Caco-2 (cell line): ENCODE measurements at regions of chr6 and their contacts with region 1.

Region 1: GRCh38 chr6:116531675-116532570 is 13.6 kb downstream of the TRAPPC3L start:
- DNase-seq: peak in 1 of 2 experiments; percentile 63
- H3K4me3 ChIP-seq: no peak overlapping the region
- H3K4me3 Mint-ChIP-seq: no peak overlapping the region
- H3K27ac Mint-ChIP-seq: no peak overlapping the region
- H3K4me1 ChIP-seq: peaks cover 37% of the 10 kb centered on the region
- H3K4me1 Mint-ChIP-seq: peaks cover 37% of the 10 kb centered on the region
- H3K27me3 ChIP-seq: no peaks in the 10 kb centered on the region
- H3K27me3 Mint-ChIP-seq: no peaks in the 10 kb centered on the region
- CTCF ChIP-seq: peak; percentile 63 to 67

Region 2: DNA sequence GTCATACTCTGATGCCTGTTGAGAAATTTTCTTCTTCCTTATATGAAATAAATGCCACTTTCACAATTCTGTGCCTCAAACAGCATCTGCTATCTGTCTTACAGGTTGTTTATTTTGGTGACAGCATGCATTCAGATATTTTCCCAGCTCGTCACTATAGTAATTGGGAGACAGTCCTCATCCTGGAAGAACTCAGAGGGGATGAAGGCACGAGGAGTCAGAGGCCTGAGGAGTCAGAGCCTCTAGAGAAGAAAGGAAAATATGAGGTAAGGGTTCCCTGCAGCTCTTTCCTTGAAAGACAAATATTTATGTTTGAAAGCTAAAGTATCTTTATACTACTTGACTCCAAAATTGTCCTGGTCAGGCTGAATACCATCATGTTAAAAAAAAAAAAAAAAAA is 293.8 kb before region 1 on chr6:
- CTCF ChIA-PET with region 1: no interaction called
- POLR2A ChIA-PET with region 1: no interaction called
- intact Hi-C with region 1: no loop called
- DNase-seq: no peak
- H3K4me3 ChIP-seq: no peak overlapping the region
- H3K4me3 Mint-ChIP-seq: no peak overlapping the region
- H3K27ac Mint-ChIP-seq: no peak overlapping the region
- H3K4me1 ChIP-seq: no peaks in the 10 kb centered on the region
- H3K4me1 Mint-ChIP-seq: no peaks in the 10 kb centered on the region
- H3K27me3 ChIP-seq: no peaks in the 10 kb centered on the region
- H3K27me3 Mint-ChIP-seq: no peaks in the 10 kb centered on the region
- CTCF ChIP-seq: no peak

Region 3: GRCh38 chr6:116287689-116288282 is 244.1 kb before region 1 on chr6:
- CTCF ChIA-PET with region 1: interaction called, 6 read pairs
- POLR2A ChIA-PET with region 1: no interaction called
- intact Hi-C with region 1: loop called (anchors 1 kb)
- DNase-seq: peak in 1 of 2 experiments; percentile 17
- H3K4me3 ChIP-seq: no peak overlapping the region
- H3K4me3 Mint-ChIP-seq: no peak overlapping the region
- H3K27ac Mint-ChIP-seq: no peak overlapping the region
- H3K4me1 ChIP-seq: no peaks in the 10 kb centered on the region
- H3K4me1 Mint-ChIP-seq: no peaks in the 10 kb centered on the region
- H3K27me3 ChIP-seq: no peaks in the 10 kb centered on the region
- H3K27me3 Mint-ChIP-seq: no peaks in the 10 kb centered on the region
- CTCF ChIP-seq: peak; percentile 76 to 81

Region 4: DNA sequence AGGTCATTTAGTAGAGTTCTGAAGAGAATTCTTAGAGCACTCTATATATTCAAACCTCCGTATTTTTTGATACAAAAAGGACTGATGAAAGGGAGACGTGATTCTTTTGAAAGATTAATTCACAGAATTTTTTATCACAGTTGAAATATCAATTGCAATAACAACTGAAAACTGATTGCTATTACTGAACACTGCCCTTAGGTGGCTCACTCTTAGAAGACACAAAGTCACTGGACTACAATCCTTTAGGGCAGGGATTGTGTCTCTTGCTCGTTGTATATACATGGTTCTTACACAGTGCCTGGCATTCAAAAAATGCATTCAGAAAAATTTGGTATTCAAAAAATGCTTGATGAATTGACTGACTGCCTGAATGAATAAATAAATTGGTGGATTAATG is 87.8 kb before region 1 on chr6:
- CTCF ChIA-PET with region 1: no interaction called
- POLR2A ChIA-PET with region 1: no interaction called
- intact Hi-C with region 1: loop called (anchors 1 kb)
- DNase-seq: no peak
- H3K4me3 ChIP-seq: no peak overlapping the region
- H3K4me3 Mint-ChIP-seq: no peak overlapping the region
- H3K27ac Mint-ChIP-seq: no peak overlapping the region
- H3K4me1 ChIP-seq: no peaks in the 10 kb centered on the region
- H3K4me1 Mint-ChIP-seq: no peaks in the 10 kb centered on the region
- H3K27me3 ChIP-seq: no peaks in the 10 kb centered on the region; the same call in 1 of the 2 replicates
- H3K27me3 Mint-ChIP-seq: peaks cover 16% of the 10 kb centered on the region
- CTCF ChIP-seq: peak; percentile 44 to 48

Region 5: GRCh38 chr6:116561377-116562018 is 29.6 kb after region 1 on chr6:
- CTCF ChIA-PET with region 1: no interaction called
- POLR2A ChIA-PET with region 1: no interaction called
- intact Hi-C with region 1: loop called (anchors 1 kb)
- DNase-seq: peak; percentile 68 to 73
- H3K4me3 ChIP-seq: no peak overlapping the region
- H3K4me3 Mint-ChIP-seq: no peak overlapping the region
- H3K27ac Mint-ChIP-seq: no peak overlapping the region
- H3K4me1 ChIP-seq: peaks cover 15% of the 10 kb centered on the region
- H3K4me1 Mint-ChIP-seq: peaks cover 26% of the 10 kb centered on the region
- H3K27me3 ChIP-seq: no peaks in the 10 kb centered on the region
- H3K27me3 Mint-ChIP-seq: no peaks in the 10 kb centered on the region
- CTCF ChIP-seq: peak; percentile 70 to 91

Region 6: GRCh38 chr6:116648156-116648555 is 116.2 kb after region 1 on chr6:
- CTCF ChIA-PET with region 1: no interaction called
- POLR2A ChIA-PET with region 1: no interaction called
- intact Hi-C with region 1: loop called (anchors 1 kb)
- DNase-seq: no peak
- H3K4me3 ChIP-seq: no peak overlapping the region
- H3K4me3 Mint-ChIP-seq: no peak overlapping the region
- H3K27ac Mint-ChIP-seq: no peak overlapping the region
- H3K4me1 ChIP-seq: no peaks in the 10 kb centered on the region
- H3K4me1 Mint-ChIP-seq: no peaks in the 10 kb centered on the region
- H3K27me3 ChIP-seq: no peaks in the 10 kb centered on the region
- H3K27me3 Mint-ChIP-seq: no peaks in the 10 kb centered on the region
- CTCF ChIP-seq: no peak

Region 7: DNA sequence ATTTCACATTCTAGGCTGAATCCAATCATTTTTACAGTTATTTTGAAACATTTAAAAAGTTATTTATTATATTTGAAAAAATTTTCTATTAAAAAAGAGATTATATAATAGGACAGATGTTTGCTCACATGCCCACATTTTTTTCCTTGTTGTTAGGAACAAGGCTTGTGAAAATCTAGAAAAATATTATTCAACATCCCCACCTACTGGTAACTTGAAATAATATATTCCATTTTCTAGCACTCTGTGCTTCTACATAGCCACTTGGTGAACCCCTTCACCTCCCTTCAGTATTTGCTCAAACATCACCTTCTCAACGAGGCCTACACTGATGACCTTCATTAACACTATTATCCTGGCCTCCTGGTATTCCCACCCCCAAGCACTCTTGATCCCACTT is 315.3 kb after region 1 on chr6:
- CTCF ChIA-PET with region 1: no interaction called
- POLR2A ChIA-PET with region 1: no interaction called
- intact Hi-C with region 1: loop called (anchors 10 kb)
- DNase-seq: peak in 1 of 2 experiments; percentile 16
- H3K4me3 ChIP-seq: no peak overlapping the region
- H3K4me3 Mint-ChIP-seq: no peak overlapping the region
- H3K27ac Mint-ChIP-seq: no peak overlapping the region
- H3K4me1 ChIP-seq: peaks cover 5% of the 10 kb centered on the region; the same call in 1 of the 2 replicates
- H3K4me1 Mint-ChIP-seq: no peaks in the 10 kb centered on the region
- H3K27me3 ChIP-seq: no peaks in the 10 kb centered on the region
- H3K27me3 Mint-ChIP-seq: no peaks in the 10 kb centered on the region
- CTCF ChIP-seq: peak in 1 of 2 experiments; percentile 45